ENCODE measurements at regions of chr6 and their contacts with region 1.

Region 1: DNA sequence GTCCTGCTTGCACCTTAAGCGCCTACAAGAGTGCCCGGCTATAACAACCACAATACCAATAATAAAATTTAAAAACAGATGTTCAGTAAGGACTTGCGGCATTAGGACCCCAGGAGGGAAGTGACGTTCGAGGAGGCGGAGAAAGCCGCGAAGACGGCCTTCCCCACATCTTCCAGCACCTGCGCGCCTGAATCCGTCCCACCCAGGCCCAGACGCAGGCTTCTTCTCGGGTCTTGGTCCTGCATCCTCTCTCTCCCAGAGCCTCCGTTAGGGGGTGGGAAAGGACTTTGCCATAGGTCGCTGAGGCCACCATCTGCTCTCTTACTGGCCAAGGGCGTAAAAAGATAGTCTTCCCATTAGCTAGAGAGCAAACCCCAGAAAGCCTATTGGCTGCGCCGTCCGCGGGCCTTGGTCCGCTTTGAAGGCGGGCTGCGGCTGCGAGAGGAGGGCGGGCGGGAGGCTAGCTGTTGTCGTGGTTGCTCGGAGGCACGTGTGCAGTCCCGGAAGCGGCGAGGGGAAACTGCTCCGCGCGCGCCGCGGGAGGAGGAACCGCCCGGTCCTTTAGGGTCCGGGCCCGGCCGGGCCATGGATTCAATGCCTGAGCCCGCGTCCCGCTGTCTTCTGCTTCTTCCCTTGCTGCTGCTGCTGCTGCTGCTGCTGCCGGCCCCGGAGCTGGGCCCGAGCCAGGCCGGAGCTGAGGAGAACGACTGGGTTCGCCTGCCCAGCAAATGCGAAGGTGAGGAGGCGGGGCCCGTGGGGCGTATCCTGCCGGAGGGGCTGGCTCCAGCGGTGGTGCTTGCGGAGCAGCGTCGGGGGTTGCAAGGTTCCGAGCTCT is at the start of gene CNPY3:
- DNase-seq: peak; percentile 91 to 95
- H3K4me3 ChIP-seq: peak within 1 kb of the TSS; percentile 61 to 82 (median 75)
- H3K27ac ChIP-seq: peak within 1 kb of the TSS; percentile 76
- H3K4me1 ChIP-seq: peaks cover 0 to 10% (median 3%) of the 10 kb centered on the region in 4 experiments; a peak in 4 of 7 replicates
- H3K27me3 ChIP-seq: no peaks in the 10 kb centered on the region
- CTCF ChIP-seq: no peak
- EP300 ChIP-seq: no peak
- POLR2A ChIP-seq: peak; percentile 56 to 73
- RAD21 ChIP-seq: no peak; a peak in 1 of 4 replicates
- total RNA-seq, gene CNPY3: 64.5 and 67.9 TPM in 2 replicates

Region 2: GRCh38 chr6:42901536-42901957 is 27.7 kb before region 1 on chr6:
- CTCF ChIA-PET with region 1: interaction called, 21 read pairs
- POLR2A ChIA-PET with region 1: interaction called, 6 read pairs
- DNase-seq: peak in 1 of 2 experiments; percentile 75
- H3K4me3 ChIP-seq: no peak overlapping the region
- H3K27ac ChIP-seq: no peak overlapping the region
- H3K4me1 ChIP-seq: peaks cover 2 to 8% (median 7%) of the 10 kb centered on the region in 4 experiments; a peak in 5 of 7 replicates
- H3K27me3 ChIP-seq: no peaks in the 10 kb centered on the region
- CTCF ChIP-seq: peak; percentile 52 to 88 (median 86)
- EP300 ChIP-seq: no peak
- POLR2A ChIP-seq: no peak
- RAD21 ChIP-seq: peak; percentile 96

Region 3: DNA sequence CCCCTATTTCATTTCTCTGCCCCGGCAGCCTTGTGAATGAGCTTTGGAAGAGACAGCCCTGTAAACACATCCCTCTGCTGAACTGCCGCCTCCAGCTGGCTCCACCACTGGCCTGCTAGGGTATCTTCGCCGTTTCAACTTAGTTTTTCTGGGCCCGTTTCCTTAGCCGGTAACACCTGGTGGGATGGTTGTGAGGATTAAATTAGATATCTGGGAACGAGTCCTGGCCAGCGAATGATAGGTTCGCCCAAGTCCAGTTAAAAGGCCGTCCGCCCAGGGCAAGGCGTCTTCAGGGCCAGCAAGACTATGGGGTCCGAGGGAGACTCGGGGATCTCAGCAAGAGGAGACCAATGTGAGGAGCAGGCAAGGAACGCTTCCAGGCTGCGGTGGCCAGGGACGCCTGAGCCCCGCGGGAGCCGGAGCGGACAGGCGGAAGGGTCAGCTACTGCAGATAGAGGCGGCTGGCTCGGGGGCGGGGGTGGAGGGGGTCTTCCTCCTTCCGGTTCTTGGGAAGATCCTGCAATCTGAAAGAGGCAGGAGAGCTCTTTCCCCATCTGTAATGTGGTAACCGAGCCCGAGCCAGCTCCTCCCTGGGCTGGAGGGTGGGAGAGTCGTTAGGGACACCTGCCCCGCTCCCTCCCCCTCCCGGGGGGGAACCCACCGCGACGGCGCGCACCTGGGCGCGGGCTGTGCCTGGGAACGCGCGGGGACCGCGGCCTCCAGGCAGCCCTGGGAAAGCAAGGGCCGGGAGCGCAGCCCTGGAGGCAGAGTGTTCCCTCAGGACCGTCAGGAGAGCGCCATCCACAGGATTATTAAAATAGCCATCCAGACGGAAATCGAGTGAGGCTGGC is 17.8 kb before region 1 on chr6:
- CTCF ChIA-PET with region 1: interaction called, 18 read pairs
- POLR2A ChIA-PET with region 1: interaction called, 81 read pairs
- DNase-seq: peak in 1 of 2 experiments; percentile 89
- H3K4me3 ChIP-seq: peak overlapping the region; percentile 44 to 72 (median 52)
- H3K27ac ChIP-seq: peak overlapping the region; percentile 41; the same call in 1 of the 2 replicates
- H3K4me1 ChIP-seq: 0 out of 7 replicates have a peak, but pooled peaks cover 0 to 1% (median 0%) of the 10 kb centered on the region in 4 experiments
- H3K27me3 ChIP-seq: no peaks in the 10 kb centered on the region; a peak in 1 of 7 replicates
- CTCF ChIP-seq: peak; percentile 40 to 58 (median 43)
- EP300 ChIP-seq: no peak
- POLR2A ChIP-seq: peak in 1 of 2 experiments; percentile 38; a peak in 1 of 3 replicates
- RAD21 ChIP-seq: peak; percentile 15 to 31; a peak in 2 of 4 replicates

Region 4: DNA sequence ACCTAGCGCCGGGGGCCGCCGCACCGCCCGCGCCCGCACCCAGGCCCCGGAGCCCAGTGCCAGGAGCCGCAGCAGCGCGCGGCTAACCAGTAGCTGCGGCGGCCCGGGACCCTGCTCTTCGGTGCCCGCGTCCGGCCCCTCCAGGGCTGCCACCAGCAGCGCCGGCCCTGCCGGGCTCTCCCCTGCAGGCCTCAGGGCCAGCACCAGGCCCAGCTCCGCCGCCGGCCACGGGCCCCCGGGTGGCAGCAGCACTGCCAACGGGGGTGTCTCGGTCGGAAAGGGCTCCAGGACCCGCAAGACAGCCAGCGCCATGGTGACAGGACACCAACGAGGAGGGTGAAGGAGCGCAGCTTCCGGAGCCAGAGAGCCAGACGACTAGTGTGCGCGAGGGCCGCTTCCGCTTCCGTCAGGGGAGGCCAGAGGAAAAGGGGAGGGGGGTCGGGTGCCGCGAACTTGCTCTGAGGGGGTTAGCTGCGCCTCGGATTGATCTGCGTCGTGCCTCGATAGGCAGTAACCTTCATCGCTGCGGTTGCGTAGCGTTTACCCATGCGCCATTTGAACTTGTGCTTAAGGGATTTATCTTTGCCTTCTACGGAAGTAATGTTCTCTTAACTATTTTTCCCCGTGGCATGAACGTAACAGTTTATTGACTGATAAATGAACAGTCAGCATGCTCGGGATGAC is 49.8 kb after region 1 on chr6 and contains the start of gene PEX6:
- CTCF ChIA-PET with region 1: no interaction called
- POLR2A ChIA-PET with region 1: interaction called, 20 read pairs
- DNase-seq: peak; percentile 76 to 89
- H3K4me3 ChIP-seq: peak within 1 kb of the TSS; percentile 67 to 92 (median 70)
- H3K27ac ChIP-seq: no peak within 1 kb of the TSS
- H3K4me1 ChIP-seq: peaks cover 4 to 10% (median 6%) of the 10 kb centered on the region in 4 experiments; a peak in 3 of 7 replicates
- H3K27me3 ChIP-seq: no peaks in the 10 kb centered on the region
- CTCF ChIP-seq: no peak; a peak in 1 of 4 replicates
- EP300 ChIP-seq: no peak
- POLR2A ChIP-seq: peak; percentile 68 to 69; a peak in 2 of 3 replicates
- RAD21 ChIP-seq: no peak
- total RNA-seq, gene PEX6: 11.7 and 12.5 TPM in 2 replicates

Region 5: DNA sequence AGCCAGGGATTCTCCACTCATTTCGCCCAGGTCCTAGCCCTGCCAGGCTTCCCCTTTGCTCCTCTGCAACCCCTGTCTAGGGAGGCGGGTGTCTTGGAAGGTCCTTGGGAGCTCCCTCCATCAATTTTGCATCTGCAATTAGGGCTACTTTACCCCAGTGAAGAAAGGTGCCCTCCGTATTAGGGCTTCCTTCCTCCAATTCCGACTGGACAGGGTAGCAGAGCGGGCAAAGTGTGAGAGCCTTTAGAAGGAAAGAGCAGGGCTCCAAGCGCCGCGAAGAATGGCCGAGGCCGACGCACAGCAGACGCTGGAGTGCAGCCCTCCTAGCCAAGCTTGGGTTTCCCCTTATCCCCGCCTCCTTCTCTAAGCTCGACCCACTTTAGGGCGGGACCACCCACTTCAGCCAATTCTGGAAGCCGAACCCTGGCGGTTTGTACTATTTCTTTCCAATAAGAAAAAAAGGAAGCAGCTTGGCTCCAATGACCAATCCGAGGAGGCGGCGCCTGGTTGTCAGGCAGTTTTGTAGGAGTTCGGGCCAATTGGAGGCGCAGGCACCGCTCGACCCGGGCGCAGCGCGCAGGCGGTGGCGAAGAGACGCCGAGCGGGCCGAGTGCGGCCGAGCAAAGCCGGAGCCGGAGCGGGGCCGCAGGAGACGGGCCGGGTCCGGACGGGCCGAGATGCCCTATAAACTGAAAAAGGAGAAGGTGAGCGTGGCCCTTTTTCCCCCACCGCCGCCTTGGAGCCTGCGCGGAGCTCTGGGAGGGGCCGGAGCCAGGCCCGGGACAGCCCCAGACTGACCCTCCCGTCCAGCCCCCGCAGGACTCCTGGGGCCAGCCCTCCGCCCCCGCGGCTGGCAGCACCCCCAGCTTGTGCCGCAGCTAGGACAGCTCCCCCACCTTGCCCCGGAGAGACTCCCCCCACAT is 55.1 kb after region 1 on chr6 and contains the start of gene PPP2R5D:
- CTCF ChIA-PET with region 1: no interaction called
- POLR2A ChIA-PET with region 1: interaction called, 20 read pairs
- DNase-seq: peak; percentile 92 to 95
- H3K4me3 ChIP-seq: peak within 1 kb of the TSS; percentile 63 to 74 (median 70)
- H3K27ac ChIP-seq: peak within 1 kb of the TSS; percentile 73
- H3K4me1 ChIP-seq: peaks cover 3 to 10% (median 5%) of the 10 kb centered on the region in 4 experiments; a peak in 6 of 7 replicates
- H3K27me3 ChIP-seq: no peaks in the 10 kb centered on the region
- CTCF ChIP-seq: no peak
- EP300 ChIP-seq: no peak
- POLR2A ChIP-seq: peak; percentile 81 to 96
- RAD21 ChIP-seq: 0 out of 4 replicates have a peak, but pooled peaks of 1 of the 2 experiments have one; percentile 4
- total RNA-seq, gene PPP2R5D: 52.1 and 52.4 TPM in 2 replicates